Tibial artery (tissue), 4 donors: ENCODE measurements at regions of chr19 and their contacts with region 1.

Region 1: GRCh38 chr19:4342615-4343369 is 570 bp upstream of the MPND start:
- DNase-seq: peak; percentile 98 to 99
- H3K4me3 ChIP-seq: peak overlapping the region; percentile 70 to 74
- H3K27ac ChIP-seq: peak overlapping the region; percentile 90 to 91
- H3K4me1 ChIP-seq: peaks cover 0 to 22% (median 14%) of the 10 kb centered on the region in 4 donors
- H3K27me3 ChIP-seq: peaks cover 0 to 4% of the 10 kb centered on the region in 2 donors
- CTCF ChIP-seq: peak in 1 of 2 experiments; percentile 62

Region 2: GRCh38 chr19:4246767-4247593 is 95.8 kb before region 1 on chr19 and contains the start of gene YJU2:
- intact Hi-C with region 1: loop called (anchors 2 kb)
- DNase-seq: peak; percentile 99 to 100
- H3K4me3 ChIP-seq: peak within 1 kb of the TSS; percentile 62 to 63
- H3K27ac ChIP-seq: peak within 1 kb of the TSS; percentile 94
- H3K4me1 ChIP-seq: peaks cover 0 to 13% (median 6%) of the 10 kb centered on the region in 4 donors
- H3K27me3 ChIP-seq: no peaks in the 10 kb centered on the region
- CTCF ChIP-seq: peak; percentile 20 to 33